Mammary epithelial cell (primary cell): ENCODE measurements at regions of chr6 and their contacts with region 1.

Region 1: GRCh38 chr6:46263707-46264086 is 92.9 kb upstream of the ENPP5 start:
- DNase-seq: peak; percentile 31
- H3K4me3 ChIP-seq: no peak overlapping the region
- H3K27ac ChIP-seq: no peak overlapping the region
- H3K4me1 ChIP-seq: no peaks in the 10 kb centered on the region
- H3K27me3 ChIP-seq: no peaks in the 10 kb centered on the region
- CTCF ChIP-seq: no peak

Region 2: GRCh38 chr6:46234156-46234556 is 29.5 kb before region 1 on chr6:
- CTCF ChIA-PET with region 1: no interaction called
- dilution Hi-C with region 1: no loop called
- in situ Hi-C with region 1: no loop called
- intact Hi-C with region 1: no loop called
- DNase-seq: no peak
- H3K4me3 ChIP-seq: no peak overlapping the region
- H3K27ac ChIP-seq: no peak overlapping the region
- H3K4me1 ChIP-seq: no peaks in the 10 kb centered on the region
- H3K27me3 ChIP-seq: no peaks in the 10 kb centered on the region
- CTCF ChIP-seq: no peak

Region 3: GRCh38 chr6:46376562-46377061 is 112.9 kb after region 1 on chr6:
- CTCF ChIA-PET with region 1: no interaction called
- dilution Hi-C with region 1: no loop called
- in situ Hi-C with region 1: no loop called
- intact Hi-C with region 1: loop called (anchors 10 kb)
- DNase-seq: no peak
- H3K4me3 ChIP-seq: no peak overlapping the region
- H3K27ac ChIP-seq: no peak overlapping the region
- H3K4me1 ChIP-seq: no peaks in the 10 kb centered on the region
- H3K27me3 ChIP-seq: peaks cover 2% of the 10 kb centered on the region
- CTCF ChIP-seq: no peak

Region 4: GRCh38 chr6:46440141-46440540 is 176.4 kb after region 1 on chr6:
- CTCF ChIA-PET with region 1: no interaction called
- dilution Hi-C with region 1: no loop called
- in situ Hi-C with region 1: no loop called
- intact Hi-C with region 1: no loop called
- DNase-seq: no peak
- H3K4me3 ChIP-seq: no peak overlapping the region
- H3K27ac ChIP-seq: no peak overlapping the region
- H3K4me1 ChIP-seq: no peaks in the 10 kb centered on the region
- H3K27me3 ChIP-seq: no peaks in the 10 kb centered on the region
- CTCF ChIP-seq: no peak